Right ventricle myocardium superior (tissue), 1 donor: ENCODE measurements at regions of chr9 and their contacts with region 1.

Region 1: GRCh38 chr9:70494221-70494620 is 79.8 kb upstream of the KLF9 start:
- DNase-seq: no peak
- ATAC-seq: peak; percentile 43

Region 2: GRCh38 chr9:70347046-70347445 is 147.2 kb before region 1 on chr9:
- intact Hi-C with region 1: loop called (anchors 5 kb)
- DNase-seq: no peak
- ATAC-seq: no peak

Region 3: DNA sequence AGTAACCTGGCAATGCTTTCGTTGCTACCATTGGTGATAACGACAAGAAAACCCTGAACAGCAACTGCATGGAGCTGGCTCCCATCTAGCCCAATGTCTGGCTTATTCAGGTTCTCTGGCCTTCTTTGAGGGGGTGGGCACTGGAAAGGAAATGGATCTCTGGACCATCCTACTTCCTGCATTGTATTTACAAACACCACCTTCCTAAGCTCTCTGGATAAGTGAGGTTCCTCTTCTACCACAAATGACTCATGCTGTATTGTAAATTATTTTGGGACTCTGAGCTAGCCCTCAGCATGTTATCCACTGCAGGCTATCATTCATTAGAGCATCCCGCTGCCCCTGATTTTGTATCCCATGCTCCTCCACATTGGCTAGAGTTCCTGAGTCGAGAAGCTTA is 57.2 kb after region 1 on chr9:
- intact Hi-C with region 1: no loop called
- DNase-seq: no peak
- ATAC-seq: no peak

Region 4: GRCh38 chr9:70587201-70587600 is 93.0 kb after region 1 on chr9:
- intact Hi-C with region 1: loop called (anchors 5 kb)
- DNase-seq: no peak
- ATAC-seq: peak; percentile 72